Activated CD4-positive, alpha-beta T cell treated with anti-CD3 and anti-CD28 coated beads, Interleukin-2, amount 10 ng/mL, durations not matched to agents 7 days and 5 days (primary cell): ENCODE measurements at regions of chr19 and their contacts with region 1.

Region 1: DNA sequence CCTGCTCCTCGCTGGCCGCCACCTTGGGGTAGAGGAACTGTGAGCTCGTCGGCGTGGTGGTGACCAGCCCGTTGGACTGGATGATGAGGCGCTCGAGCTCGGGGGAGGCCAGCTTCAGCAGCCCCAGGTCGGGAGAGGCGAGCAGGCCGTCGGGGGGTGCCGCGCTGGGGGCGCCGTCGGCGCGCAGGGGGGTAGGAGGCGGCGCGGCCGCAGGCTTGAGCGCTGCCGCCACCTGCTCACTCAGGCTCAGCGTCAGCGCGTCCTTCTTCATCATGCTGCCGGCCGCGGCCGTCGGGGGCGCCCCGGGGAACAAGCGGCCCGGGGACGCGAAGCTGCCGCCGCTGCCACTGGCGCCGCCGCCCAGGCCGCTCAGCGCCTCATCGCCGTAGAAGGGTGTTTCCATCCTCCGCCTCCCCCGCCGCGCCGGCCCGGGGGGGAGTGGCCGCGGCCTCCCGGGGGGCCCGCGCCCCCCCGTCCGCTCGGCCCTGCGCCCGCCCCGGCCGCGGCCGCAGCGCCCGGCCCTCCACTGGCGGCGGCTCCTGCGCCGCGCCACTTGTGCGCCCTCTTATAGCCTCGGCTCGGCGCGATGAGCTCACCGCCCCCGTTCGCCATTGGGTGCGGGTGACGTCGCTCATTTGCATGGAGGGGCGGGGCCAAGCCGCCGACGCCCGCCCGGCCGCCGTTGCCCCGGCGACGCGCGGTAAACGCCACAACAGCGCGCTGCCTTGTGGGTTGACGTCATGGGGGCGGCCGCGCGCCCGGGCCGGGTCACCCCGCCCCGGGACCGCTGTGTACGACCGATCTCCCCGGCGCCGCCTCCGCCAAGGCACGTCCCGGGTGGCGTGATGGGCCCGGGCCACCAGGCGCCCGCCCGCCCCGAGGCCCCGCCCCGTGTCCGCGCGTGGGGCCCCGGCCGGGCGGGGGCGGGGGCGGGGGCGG is at the start of gene JUND:
- DNase-seq: peak; percentile 97
- H3K4me3 Mint-ChIP-seq: peak within 1 kb of the TSS; percentile 86
- H3K27ac Mint-ChIP-seq: peak within 1 kb of the TSS; percentile 98
- H3K4me1 Mint-ChIP-seq: peaks cover 50% of the 10 kb centered on the region
- H3K27me3 Mint-ChIP-seq: no peaks in the 10 kb centered on the region
- total RNA-seq, gene JUND: 343 to 347 TPM

Region 2: DNA sequence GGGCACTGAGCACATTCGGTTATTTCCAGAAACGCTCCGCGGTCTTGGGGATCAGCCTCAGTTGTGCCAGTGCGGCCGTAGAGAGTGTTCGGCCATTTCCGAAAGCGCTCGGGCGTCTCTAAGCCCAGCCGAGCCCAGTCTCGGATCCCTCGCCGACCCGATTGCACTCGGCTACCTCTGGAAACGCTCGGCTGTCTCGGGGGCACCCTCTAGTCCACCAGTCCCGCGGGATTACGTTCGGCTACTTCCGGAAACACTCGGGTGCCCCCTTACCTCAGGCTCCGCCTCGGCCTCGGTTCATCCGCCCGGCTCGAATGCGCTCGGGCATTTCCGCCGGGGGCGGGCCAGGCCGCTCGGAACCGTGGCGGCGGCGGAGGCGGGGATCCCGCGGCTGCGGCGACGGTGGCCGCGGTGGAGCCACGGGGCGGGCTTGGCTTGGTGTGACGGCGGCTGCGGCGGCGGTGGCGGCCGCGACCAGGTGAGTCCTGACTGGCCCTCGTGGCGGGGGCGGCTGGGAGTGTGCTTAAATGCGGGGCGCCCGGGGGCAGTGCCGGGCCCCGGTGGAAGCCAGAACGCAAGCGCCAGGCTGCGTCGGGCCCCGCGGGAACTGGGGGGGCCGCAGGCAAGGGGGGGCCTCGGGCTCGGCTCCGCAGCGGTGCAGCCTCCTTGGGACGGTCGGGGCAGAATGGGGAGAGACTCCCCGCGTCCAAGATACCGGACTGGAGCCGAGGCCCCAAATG is 128.4 kb before region 1 on chr19 and contains the start of gene PIK3R2:
- CTCF ChIA-PET with region 1: no interaction called
- POLR2A ChIA-PET with region 1: no interaction called
- DNase-seq: peak; percentile 100
- H3K4me3 Mint-ChIP-seq: peak within 1 kb of the TSS; percentile 82
- H3K27ac Mint-ChIP-seq: peak within 1 kb of the TSS; percentile 99
- H3K4me1 Mint-ChIP-seq: peaks cover 27% of the 10 kb centered on the region
- H3K27me3 Mint-ChIP-seq: no peaks in the 10 kb centered on the region
- total RNA-seq, gene PIK3R2: 12.6 to 13.1 TPM

Region 3: DNA sequence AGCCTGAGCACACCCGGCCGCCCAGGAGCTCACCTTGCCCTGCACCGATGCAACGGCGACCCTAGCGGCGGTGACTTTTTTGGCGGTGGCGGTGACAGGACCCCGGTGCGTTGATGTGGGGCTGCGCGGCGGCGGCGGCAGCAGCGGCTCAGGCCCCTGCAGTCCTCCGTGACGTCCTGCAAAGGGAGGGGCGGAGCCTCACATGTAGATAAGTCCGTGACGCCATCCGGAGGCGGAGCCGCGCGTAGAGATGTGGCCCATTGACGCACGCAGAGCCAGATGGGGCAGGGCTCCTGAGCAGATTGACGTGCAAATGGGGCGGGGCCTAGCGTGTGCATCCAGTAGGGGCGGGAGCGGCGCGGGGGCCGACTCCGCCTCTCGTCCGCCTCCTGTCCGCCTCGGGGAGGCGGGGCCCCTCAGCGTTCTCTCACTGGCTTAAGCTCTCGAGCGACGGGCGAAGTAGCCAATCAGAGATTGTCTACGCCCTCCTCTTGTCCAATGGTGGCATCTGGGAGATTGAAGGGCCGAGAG is 77.4 kb before region 1 on chr19 and contains the start of gene RAB3A:
- CTCF ChIA-PET with region 1: interaction called, 14 read pairs
- POLR2A ChIA-PET with region 1: no interaction called
- DNase-seq: peak; percentile 100
- H3K4me3 Mint-ChIP-seq: peak within 1 kb of the TSS; percentile 94
- H3K27ac Mint-ChIP-seq: peak within 1 kb of the TSS; percentile 98
- H3K4me1 Mint-ChIP-seq: peaks cover 23% of the 10 kb centered on the region
- H3K27me3 Mint-ChIP-seq: peaks cover 4% of the 10 kb centered on the region
- total RNA-seq, gene RAB3A: 4.0 to 5.2 TPM

Region 4: GRCh38 chr19:18264137-18264854 is 17.1 kb before region 1 on chr19:
- CTCF ChIA-PET with region 1: interaction called, 34 read pairs
- POLR2A ChIA-PET with region 1: interaction called, 5 read pairs
- DNase-seq: no peak
- H3K4me3 Mint-ChIP-seq: no peak overlapping the region
- H3K27ac Mint-ChIP-seq: no peak overlapping the region
- H3K4me1 Mint-ChIP-seq: peaks cover 5% of the 10 kb centered on the region
- H3K27me3 Mint-ChIP-seq: no peaks in the 10 kb centered on the region

Region 5: DNA sequence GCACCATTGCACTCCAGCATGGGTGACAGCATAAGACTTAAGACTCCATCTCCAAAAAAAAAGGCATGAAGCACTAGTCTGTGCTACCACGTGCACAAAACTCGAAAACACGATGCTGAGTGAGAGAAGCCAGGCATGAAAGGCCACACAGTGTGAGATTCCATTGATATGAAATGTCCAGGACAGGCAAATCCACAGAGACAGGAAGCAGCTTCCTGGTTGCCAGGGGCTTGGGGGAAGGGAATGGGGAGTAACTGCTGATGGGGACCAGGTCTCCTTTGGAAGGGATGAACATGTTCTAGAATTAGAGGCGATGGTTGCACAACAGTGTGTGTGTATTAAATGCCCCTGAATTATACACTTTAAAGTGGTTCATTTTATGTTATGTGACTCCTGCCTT is 16.0 kb after region 1 on chr19:
- CTCF ChIA-PET with region 1: interaction called, 98 read pairs
- POLR2A ChIA-PET with region 1: interaction called, 128 read pairs
- DNase-seq: no peak
- H3K4me3 Mint-ChIP-seq: no peak overlapping the region
- H3K27ac Mint-ChIP-seq: no peak overlapping the region
- H3K4me1 Mint-ChIP-seq: peaks cover 66% of the 10 kb centered on the region
- H3K27me3 Mint-ChIP-seq: no peaks in the 10 kb centered on the region

Region 6: GRCh38 chr19:18322759-18323460 is 41.6 kb after region 1 on chr19 and contains the start of gene LSM4:
- CTCF ChIA-PET with region 1: interaction called, 229 read pairs
- POLR2A ChIA-PET with region 1: interaction called, 85 read pairs
- DNase-seq: peak; percentile 100
- H3K4me3 Mint-ChIP-seq: peak within 1 kb of the TSS; percentile 93
- H3K27ac Mint-ChIP-seq: peak within 1 kb of the TSS; percentile 97
- H3K4me1 Mint-ChIP-seq: peaks cover 56% of the 10 kb centered on the region
- H3K27me3 Mint-ChIP-seq: no peaks in the 10 kb centered on the region
- total RNA-seq, gene LSM4: 156 to 181 TPM

Region 7: GRCh38 chr19:18340190-18340989 is 59.0 kb after region 1 on chr19 and contains the start of gene PGPEP1:
- CTCF ChIA-PET with region 1: interaction called, 25 read pairs
- POLR2A ChIA-PET with region 1: interaction called, 5 read pairs
- DNase-seq: peak; percentile 51
- H3K4me3 Mint-ChIP-seq: peak within 1 kb of the TSS; percentile 82
- H3K27ac Mint-ChIP-seq: peak within 1 kb of the TSS; percentile 81
- H3K4me1 Mint-ChIP-seq: peaks cover 22% of the 10 kb centered on the region
- H3K27me3 Mint-ChIP-seq: no peaks in the 10 kb centered on the region
- total RNA-seq, gene PGPEP1: 24.1 to 24.8 TPM

Region 8: GRCh38 chr19:18388100-18388959 is 107.0 kb after region 1 on chr19:
- CTCF ChIA-PET with region 1: interaction called, 28 read pairs
- POLR2A ChIA-PET with region 1: interaction called, 3 read pairs
- DNase-seq: peak; percentile 75
- H3K4me3 Mint-ChIP-seq: peak overlapping the region; percentile 64
- H3K27ac Mint-ChIP-seq: no peak overlapping the region
- H3K4me1 Mint-ChIP-seq: peaks cover 15% of the 10 kb centered on the region
- H3K27me3 Mint-ChIP-seq: peaks cover 65% of the 10 kb centered on the region

Region 9: DNA sequence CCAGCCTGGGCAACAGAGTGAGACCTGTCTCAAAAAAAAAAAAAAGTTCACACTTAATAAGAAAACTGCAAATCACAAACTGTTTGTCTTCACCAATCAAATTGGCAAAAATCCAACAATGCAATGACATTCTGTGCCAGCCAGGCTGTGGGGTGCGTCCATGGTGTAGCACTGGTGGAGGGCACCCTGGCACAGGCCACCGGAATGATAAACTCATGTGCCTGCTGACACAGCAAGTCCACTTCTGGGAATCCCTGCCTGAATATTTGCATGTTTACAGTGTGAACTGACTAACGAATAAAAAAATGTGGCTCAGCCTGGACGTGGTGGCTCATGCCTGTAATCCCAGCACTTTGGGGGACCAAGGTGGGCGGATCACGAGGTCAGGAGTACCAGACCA is 117.7 kb after region 1 on chr19:
- CTCF ChIA-PET with region 1: no interaction called
- POLR2A ChIA-PET with region 1: no interaction called
- DNase-seq: no peak
- H3K4me3 Mint-ChIP-seq: no peak overlapping the region
- H3K27ac Mint-ChIP-seq: no peak overlapping the region
- H3K4me1 Mint-ChIP-seq: peaks cover 16% of the 10 kb centered on the region
- H3K27me3 Mint-ChIP-seq: peaks cover 15% of the 10 kb centered on the region

Region 10: GRCh38 chr19:18440415-18440877 is 159.1 kb after region 1 on chr19:
- CTCF ChIA-PET with region 1: no interaction called
- POLR2A ChIA-PET with region 1: no interaction called
- DNase-seq: peak; percentile 43
- H3K4me3 Mint-ChIP-seq: no peak overlapping the region
- H3K27ac Mint-ChIP-seq: peak overlapping the region; percentile 72
- H3K4me1 Mint-ChIP-seq: peaks cover 33% of the 10 kb centered on the region
- H3K27me3 Mint-ChIP-seq: no peaks in the 10 kb centered on the region